Calu3 (cell line): ENCODE measurements at regions of chr3 and their contacts with region 1.

Region 1: GRCh38 chr3:97066531-97066930 is 252.1 kb downstream of the EPHA6 start:
- DNase-seq: no peak
- H3K4me3 Mint-ChIP-seq: no peak overlapping the region
- H3K27ac Mint-ChIP-seq: no peak overlapping the region
- H3K4me1 Mint-ChIP-seq: no peaks in the 10 kb centered on the region
- H3K27me3 Mint-ChIP-seq: no peaks in the 10 kb centered on the region
- CTCF ChIP-seq: no peak

Region 2: GRCh38 chr3:97278506-97278905 is 212.0 kb after region 1 on chr3:
- CTCF ChIA-PET with region 1: no interaction called
- intact Hi-C with region 1: loop called (anchors 10 kb)
- DNase-seq: no peak
- H3K4me3 Mint-ChIP-seq: no peak overlapping the region
- H3K27ac Mint-ChIP-seq: no peak overlapping the region
- H3K4me1 Mint-ChIP-seq: peaks cover 9% of the 10 kb centered on the region
- H3K27me3 Mint-ChIP-seq: no peaks in the 10 kb centered on the region
- CTCF ChIP-seq: no peak